ENCODE measurements at regions of chr11 and their contacts with region 1.

Region 1: GRCh38 chr11:24234822-24235508 is 261.9 kb upstream of the LUZP2 start:
- DNase-seq: peak; percentile 62
- H3K4me3 Mint-ChIP-seq: no peak overlapping the region
- H3K27ac Mint-ChIP-seq: no peak overlapping the region
- H3K4me1 Mint-ChIP-seq: peaks cover 8% of the 10 kb centered on the region
- H3K27me3 Mint-ChIP-seq: no peaks in the 10 kb centered on the region
- CTCF ChIP-seq: no peak

Region 2: GRCh38 chr11:23021287-23021863 is 1213.6 kb before region 1 on chr11:
- CTCF ChIA-PET with region 1: no interaction called
- intact Hi-C with region 1: loop called (anchors 10 kb)
- DNase-seq: peak; percentile 34
- H3K4me3 Mint-ChIP-seq: no peak overlapping the region
- H3K27ac Mint-ChIP-seq: no peak overlapping the region
- H3K4me1 Mint-ChIP-seq: no peaks in the 10 kb centered on the region
- H3K27me3 Mint-ChIP-seq: no peaks in the 10 kb centered on the region
- CTCF ChIP-seq: peak; percentile 64

Region 3: GRCh38 chr11:23540101-23540561 is 694.8 kb before region 1 on chr11:
- CTCF ChIA-PET with region 1: no interaction called
- intact Hi-C with region 1: loop called (anchors 1 kb)
- DNase-seq: peak; percentile 34
- H3K4me3 Mint-ChIP-seq: peak overlapping the region; percentile 29
- H3K27ac Mint-ChIP-seq: no peak overlapping the region
- H3K4me1 Mint-ChIP-seq: peaks cover 22% of the 10 kb centered on the region
- H3K27me3 Mint-ChIP-seq: no peaks in the 10 kb centered on the region
- CTCF ChIP-seq: peak; percentile 65

Region 4: GRCh38 chr11:23836981-23837380 is 398.0 kb before region 1 on chr11:
- CTCF ChIA-PET with region 1: no interaction called
- intact Hi-C with region 1: loop called (anchors 5 kb)
- DNase-seq: no peak
- H3K4me3 Mint-ChIP-seq: no peak overlapping the region
- H3K27ac Mint-ChIP-seq: no peak overlapping the region
- H3K4me1 Mint-ChIP-seq: no peaks in the 10 kb centered on the region
- H3K27me3 Mint-ChIP-seq: no peaks in the 10 kb centered on the region
- CTCF ChIP-seq: no peak

Region 5: GRCh38 chr11:24046731-24047130 is 188.2 kb before region 1 on chr11:
- CTCF ChIA-PET with region 1: no interaction called
- intact Hi-C with region 1: no loop called
- DNase-seq: no peak
- H3K4me3 Mint-ChIP-seq: no peak overlapping the region
- H3K27ac Mint-ChIP-seq: no peak overlapping the region
- H3K4me1 Mint-ChIP-seq: no peaks in the 10 kb centered on the region
- H3K27me3 Mint-ChIP-seq: no peaks in the 10 kb centered on the region
- CTCF ChIP-seq: no peak

Region 6: GRCh38 chr11:24373516-24373915 is 138.6 kb after region 1 on chr11:
- CTCF ChIA-PET with region 1: no interaction called
- intact Hi-C with region 1: no loop called
- DNase-seq: no peak
- H3K4me3 Mint-ChIP-seq: no peak overlapping the region
- H3K27ac Mint-ChIP-seq: no peak overlapping the region
- H3K4me1 Mint-ChIP-seq: no peaks in the 10 kb centered on the region
- H3K27me3 Mint-ChIP-seq: no peaks in the 10 kb centered on the region
- CTCF ChIP-seq: no peak

Measured in Calu3 (cell line).